Tibial artery (tissue), 4 donors: ENCODE measurements at regions of chr1 and their contacts with region 1.

Region 1: GRCh38 chr1:157490467-157491165 is 61.7 kb downstream of the FCRL5 start:
- DNase-seq: peak in 1 of 2 donors; percentile 50
- H3K4me3 ChIP-seq: no peak overlapping the region
- H3K27ac ChIP-seq: no peak overlapping the region
- H3K4me1 ChIP-seq: no peaks in the 10 kb centered on the region
- H3K27me3 ChIP-seq: peaks cover 0 to 13% of the 10 kb centered on the region in 2 donors
- CTCF ChIP-seq: peak in 1 of 2 experiments; percentile 28

Region 2: DNA sequence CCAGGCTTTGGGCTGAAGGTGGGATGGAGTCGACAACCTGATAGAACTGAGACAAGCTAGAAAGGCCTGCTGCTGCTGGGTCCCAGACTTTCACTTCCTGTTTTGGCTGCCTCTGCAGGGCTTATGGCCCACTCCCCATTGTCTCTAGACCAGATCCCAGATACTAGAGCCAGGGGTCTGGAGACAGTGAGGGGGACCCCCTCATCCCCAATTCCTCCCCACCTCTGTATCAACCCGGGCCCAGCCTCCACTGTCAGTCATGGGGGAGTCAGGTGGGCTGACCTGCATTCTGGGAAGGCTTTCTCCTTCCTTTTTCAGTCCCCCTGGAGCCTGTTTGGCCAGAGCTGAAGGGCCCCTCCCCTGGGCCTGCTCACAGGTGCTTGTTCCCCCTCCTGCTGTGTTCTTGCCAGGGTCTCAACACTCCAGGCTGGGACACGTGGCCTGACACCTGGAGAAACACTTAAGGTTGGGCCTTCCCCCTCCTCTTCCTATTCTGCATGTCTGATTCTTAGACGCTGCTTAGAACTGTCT is 373.0 kb before region 1 on chr1:
- intact Hi-C with region 1: no loop called
- DNase-seq: peak in 1 of 2 donors; percentile 31
- H3K4me3 ChIP-seq: no peak overlapping the region
- H3K27ac ChIP-seq: no peak overlapping the region
- H3K4me1 ChIP-seq: no peaks in the 10 kb centered on the region
- H3K27me3 ChIP-seq: peaks cover 0 to 14% of the 10 kb centered on the region in 2 donors
- CTCF ChIP-seq: no peak

Region 3: GRCh38 chr1:157181258-157181657 is 309.4 kb before region 1 on chr1:
- intact Hi-C with region 1: loop called (anchors 10 kb)
- DNase-seq: peak in 1 of 2 donors; percentile 42
- H3K4me3 ChIP-seq: no peak overlapping the region
- H3K27ac ChIP-seq: no peak overlapping the region
- H3K4me1 ChIP-seq: no peaks in the 10 kb centered on the region
- H3K27me3 ChIP-seq: peaks cover 0 to 7% of the 10 kb centered on the region in 2 donors
- CTCF ChIP-seq: no peak

Region 4: GRCh38 chr1:157315544-157315943 is 175.1 kb before region 1 on chr1:
- intact Hi-C with region 1: no loop called
- DNase-seq: no peak
- H3K4me3 ChIP-seq: no peak overlapping the region
- H3K27ac ChIP-seq: no peak overlapping the region
- H3K4me1 ChIP-seq: no peaks in the 10 kb centered on the region
- H3K27me3 ChIP-seq: no peaks in the 10 kb centered on the region
- CTCF ChIP-seq: no peak

Region 5: GRCh38 chr1:157369808-157370521 is 120.7 kb before region 1 on chr1:
- intact Hi-C with region 1: loop called (anchors 10 kb)
- DNase-seq: peak in 1 of 2 donors; percentile 33
- H3K4me3 ChIP-seq: no peak overlapping the region
- H3K27ac ChIP-seq: no peak overlapping the region
- H3K4me1 ChIP-seq: no peaks in the 10 kb centered on the region
- H3K27me3 ChIP-seq: peaks cover 0 to 3% of the 10 kb centered on the region in 2 donors
- CTCF ChIP-seq: peak; percentile 64 to 88